ENCODE measurements at regions of chr3 and their contacts with region 1.

Region 1: DNA sequence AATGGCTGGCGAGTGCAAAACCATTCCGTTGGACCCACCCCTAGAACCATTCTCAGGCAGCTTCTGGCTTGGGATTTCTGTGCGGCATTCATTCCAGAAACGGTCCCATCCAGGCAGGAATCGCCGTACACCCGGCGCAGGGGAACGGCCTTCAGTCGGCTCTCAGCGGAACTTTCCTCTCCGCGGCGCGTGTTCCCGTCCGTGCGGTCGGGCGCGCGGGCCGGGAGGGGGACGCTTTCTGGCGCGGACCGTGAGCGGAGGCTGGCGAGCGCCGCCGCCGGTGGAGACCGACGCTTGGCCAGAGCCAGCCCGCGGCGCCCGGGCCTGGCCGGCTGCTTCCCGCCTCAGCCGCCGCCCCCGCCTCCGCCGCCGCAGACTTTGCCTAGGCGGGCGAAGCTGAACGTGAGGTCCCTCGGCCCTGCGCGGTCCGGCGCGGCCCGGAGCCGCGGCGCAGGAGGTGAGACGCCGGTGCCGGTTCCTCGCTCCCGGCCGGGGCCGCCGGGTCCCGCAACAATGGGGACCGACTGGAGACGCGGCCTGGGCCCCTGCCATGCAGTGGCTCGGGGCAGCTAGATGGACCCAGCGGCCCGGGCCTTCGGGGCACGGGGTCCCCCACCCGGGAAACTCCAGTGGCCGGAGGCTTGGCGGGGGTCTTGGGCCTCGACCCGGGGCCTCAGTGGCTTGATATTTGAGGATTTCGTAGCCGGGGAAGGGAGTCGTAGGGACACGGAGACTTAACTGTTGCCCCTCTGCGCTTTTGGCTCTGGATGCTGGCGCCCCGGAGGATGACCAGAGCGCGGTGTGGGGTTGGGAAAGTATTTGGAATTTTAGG is at the start of gene RAD54L2:
- DNase-seq: peak; percentile 82
- H3K4me3 Mint-ChIP-seq: peak within 1 kb of the TSS; percentile 74
- H3K27ac Mint-ChIP-seq: peak within 1 kb of the TSS; percentile 65
- H3K4me1 Mint-ChIP-seq: peaks cover 17% of the 10 kb centered on the region
- H3K27me3 Mint-ChIP-seq: no peaks in the 10 kb centered on the region
- CTCF ChIP-seq: peak; percentile 22
- total RNA-seq, gene RAD54L2: 23.5 and 28.2 TPM in 2 replicates

Region 2: GRCh38 chr3:51519848-51520247 is 18.8 kb before region 1 on chr3:
- CTCF ChIA-PET with region 1: interaction called, 3 read pairs
- POLR2A ChIA-PET with region 1: interaction called, 13 read pairs
- intact Hi-C with region 1: no loop called
- DNase-seq: no peak
- H3K4me3 Mint-ChIP-seq: no peak overlapping the region
- H3K27ac Mint-ChIP-seq: no peak overlapping the region
- H3K4me1 Mint-ChIP-seq: no peaks in the 10 kb centered on the region
- H3K27me3 Mint-ChIP-seq: no peaks in the 10 kb centered on the region
- CTCF ChIP-seq: no peak

Region 3: GRCh38 chr3:51550047-51550819 is 11.6 kb after region 1 on chr3:
- CTCF ChIA-PET with region 1: interaction called, 3 read pairs
- POLR2A ChIA-PET with region 1: interaction called, 12 read pairs
- intact Hi-C with region 1: no loop called
- DNase-seq: no peak
- H3K4me3 Mint-ChIP-seq: no peak overlapping the region
- H3K27ac Mint-ChIP-seq: peak overlapping the region; percentile 64
- H3K4me1 Mint-ChIP-seq: peaks cover 4% of the 10 kb centered on the region
- H3K27me3 Mint-ChIP-seq: no peaks in the 10 kb centered on the region
- CTCF ChIP-seq: no peak

Region 4: GRCh38 chr3:51568036-51568435 is 29.4 kb after region 1 on chr3:
- CTCF ChIA-PET with region 1: interaction called, 3 read pairs
- POLR2A ChIA-PET with region 1: interaction called, 12 read pairs
- intact Hi-C with region 1: no loop called
- DNase-seq: no peak
- H3K4me3 Mint-ChIP-seq: no peak overlapping the region
- H3K27ac Mint-ChIP-seq: no peak overlapping the region
- H3K4me1 Mint-ChIP-seq: no peaks in the 10 kb centered on the region
- H3K27me3 Mint-ChIP-seq: no peaks in the 10 kb centered on the region
- CTCF ChIP-seq: no peak

Measured in MCF 10A (cell line).